ENCODE measurements at regions of chr9 and their contacts with region 1.

Region 1: DNA sequence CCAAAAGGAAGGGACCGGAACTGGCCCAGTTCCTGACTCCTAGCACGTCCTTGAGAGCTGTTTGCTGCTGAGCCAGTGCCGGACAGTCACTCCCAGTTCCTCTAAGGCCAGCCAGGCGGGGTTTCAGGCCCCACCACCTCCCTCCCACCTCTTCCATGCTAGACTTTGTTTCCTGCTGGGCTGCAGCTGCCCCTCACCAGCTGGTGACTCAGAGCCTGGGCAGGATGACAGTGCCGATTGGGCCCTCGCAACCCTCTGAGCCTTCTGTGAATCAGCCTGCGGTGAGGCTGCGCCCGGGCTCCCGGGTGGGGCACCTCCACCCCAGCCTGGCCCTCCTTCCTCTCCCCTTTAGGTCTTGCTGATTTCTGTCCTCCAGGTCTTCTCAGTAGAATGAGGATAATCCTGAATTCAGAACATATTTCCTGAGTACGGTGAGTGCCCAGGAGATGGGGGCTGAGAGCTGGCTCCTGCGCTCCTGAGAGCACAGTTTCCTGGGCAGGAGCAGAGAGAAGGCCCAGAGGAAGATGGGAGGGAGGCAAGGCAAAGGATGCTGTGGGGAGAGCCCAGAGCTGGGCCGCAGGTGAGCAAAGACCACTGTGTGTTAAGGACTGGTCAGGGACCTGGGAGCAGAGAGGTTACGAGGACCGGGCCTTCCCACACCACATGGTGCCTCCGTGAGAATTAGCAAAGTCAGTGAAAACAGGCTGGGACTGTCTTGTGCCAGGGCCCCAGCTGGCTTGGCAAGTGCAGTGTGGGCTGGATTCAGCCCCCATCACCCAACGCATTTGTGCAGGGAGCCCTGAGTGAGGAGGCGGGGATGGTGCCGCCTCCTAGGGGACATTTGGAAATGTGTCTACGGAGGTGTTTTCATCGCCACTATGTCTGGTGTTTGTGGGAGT is 32.9 kb upstream of the STXBP1 start:
- DNase-seq: peak; percentile 88
- H3K4me3 Mint-ChIP-seq: peak overlapping the region; percentile 82
- H3K27ac Mint-ChIP-seq: peak overlapping the region; percentile 92
- H3K4me1 Mint-ChIP-seq: peaks cover 65% of the 10 kb centered on the region
- H3K27me3 Mint-ChIP-seq: no peaks in the 10 kb centered on the region

Region 2: DNA sequence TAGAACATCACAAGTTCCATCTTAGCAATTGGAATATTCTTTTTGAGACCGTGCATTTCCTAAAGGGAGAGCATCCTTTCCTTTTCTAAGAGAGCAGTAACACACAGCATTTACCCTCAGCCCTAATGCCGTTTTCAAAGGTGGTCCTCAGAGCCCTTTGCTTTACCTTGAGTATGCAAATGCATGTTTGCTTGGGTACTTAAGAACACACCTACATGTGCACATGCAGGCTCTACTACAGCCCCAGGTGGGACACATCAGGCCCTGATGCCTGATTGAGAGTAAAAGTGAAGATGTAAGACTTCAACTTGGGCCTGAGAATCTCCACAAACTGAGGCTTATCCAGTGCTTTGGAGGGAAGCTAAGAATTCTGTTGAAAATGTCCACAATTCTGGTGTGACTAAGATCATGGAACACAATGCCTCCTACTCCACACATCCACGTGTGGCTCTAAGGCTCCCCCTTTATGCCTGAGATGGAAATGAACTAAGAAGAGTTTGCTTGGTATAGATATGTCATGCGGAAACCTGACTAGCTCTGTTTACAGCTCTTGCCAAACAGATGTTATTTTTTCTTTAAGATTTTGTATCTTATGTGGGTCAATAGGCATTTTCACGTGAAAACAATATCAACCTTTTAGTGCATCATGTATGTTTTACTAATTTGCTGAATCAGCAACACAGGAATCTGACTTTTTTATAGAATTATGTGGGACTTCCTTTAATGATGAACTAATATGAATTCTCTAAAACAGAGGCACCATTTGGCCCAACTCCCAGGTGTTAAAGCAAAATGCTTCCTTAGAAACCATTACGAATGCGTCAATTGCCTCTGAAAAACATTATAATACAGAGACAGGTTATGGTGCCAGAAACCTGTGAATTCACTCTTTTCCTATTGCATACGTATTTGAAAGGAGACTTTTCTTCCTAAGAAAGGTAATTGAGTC is 231.1 kb before region 1 on chr9:
- CTCF ChIA-PET with region 1: no interaction called
- POLR2A ChIA-PET with region 1: no interaction called
- DNase-seq: no peak
- H3K4me3 Mint-ChIP-seq: no peak overlapping the region
- H3K27ac Mint-ChIP-seq: no peak overlapping the region
- H3K4me1 Mint-ChIP-seq: no peaks in the 10 kb centered on the region
- H3K27me3 Mint-ChIP-seq: peaks cover 11% of the 10 kb centered on the region

Region 3: GRCh38 chr9:127525401-127526187 is 53.6 kb before region 1 on chr9:
- CTCF ChIA-PET with region 1: interaction called, 12 read pairs
- POLR2A ChIA-PET with region 1: interaction called, 9 read pairs
- DNase-seq: peak; percentile 40
- H3K4me3 Mint-ChIP-seq: no peak overlapping the region
- H3K27ac Mint-ChIP-seq: no peak overlapping the region
- H3K4me1 Mint-ChIP-seq: peaks cover 5% of the 10 kb centered on the region
- H3K27me3 Mint-ChIP-seq: no peaks in the 10 kb centered on the region

Measured in activated CD4-positive, alpha-beta memory T cell treated with anti-CD3 and anti-CD28 coated beads, Interleukin-2, amount 10 ng/mL, durations not matched to agents 7 days and 5 days (primary cell).